Right ventricle myocardium inferior (tissue), 1 donor: ENCODE measurements at regions of chr12 and their contacts with region 1.

Region 1: GRCh38 chr12:4526923-4527546 is 11.7 kb upstream of the RAD51AP1 start:
- DNase-seq: no peak
- ATAC-seq: no peak

Region 2: GRCh38 chr12:4320853-4321701 is 206.0 kb before region 1 on chr12 and contains the start of gene TIGAR:
- intact Hi-C with region 1: loop called (anchors 10 kb)
- DNase-seq: peak; percentile 98
- ATAC-seq: peak; percentile 100
- total RNA-seq, gene TIGAR: 16.5 TPM

Region 3: GRCh38 chr12:4353785-4354208 is 173.2 kb before region 1 on chr12:
- intact Hi-C with region 1: loop called (anchors 5 kb)
- DNase-seq: no peak
- ATAC-seq: no peak

Region 4: GRCh38 chr12:4421590-4422031 is 105.4 kb before region 1 on chr12:
- intact Hi-C with region 1: loop called (anchors 5 kb)
- DNase-seq: no peak
- ATAC-seq: no peak